Psoas muscle (tissue), 8 donors: ENCODE measurements at regions of chr1 and their contacts with region 1.

Region 1: DNA sequence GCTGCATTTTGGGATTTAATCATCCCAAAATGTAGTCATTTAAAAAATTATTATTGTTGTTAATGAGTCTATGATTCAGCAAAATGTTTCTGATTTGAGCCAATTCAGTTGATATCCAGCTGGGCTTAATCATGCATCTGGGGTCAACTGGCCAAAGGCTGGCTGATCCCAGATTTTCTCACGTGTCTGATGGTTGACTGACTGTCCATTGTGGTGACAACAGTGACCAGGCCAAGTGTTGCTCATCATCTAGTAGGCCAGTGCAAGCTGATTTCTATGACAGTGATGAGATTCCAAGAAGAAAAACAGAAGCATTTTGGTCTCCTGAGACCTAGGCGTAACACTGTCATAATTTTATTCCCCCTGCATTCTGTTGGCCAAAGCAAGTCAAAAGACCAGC is 80.1 kb upstream of the ZC3H11B start:
- DNase-seq: no peak
- ATAC-seq: no peak
- H3K4me3 ChIP-seq: no peak overlapping the region
- H3K27ac ChIP-seq: no peak overlapping the region
- H3K4me1 ChIP-seq: no peaks in the 10 kb centered on the region
- H3K27me3 ChIP-seq: no peaks in the 10 kb centered on the region
- CTCF ChIP-seq: no peak

Region 2: DNA sequence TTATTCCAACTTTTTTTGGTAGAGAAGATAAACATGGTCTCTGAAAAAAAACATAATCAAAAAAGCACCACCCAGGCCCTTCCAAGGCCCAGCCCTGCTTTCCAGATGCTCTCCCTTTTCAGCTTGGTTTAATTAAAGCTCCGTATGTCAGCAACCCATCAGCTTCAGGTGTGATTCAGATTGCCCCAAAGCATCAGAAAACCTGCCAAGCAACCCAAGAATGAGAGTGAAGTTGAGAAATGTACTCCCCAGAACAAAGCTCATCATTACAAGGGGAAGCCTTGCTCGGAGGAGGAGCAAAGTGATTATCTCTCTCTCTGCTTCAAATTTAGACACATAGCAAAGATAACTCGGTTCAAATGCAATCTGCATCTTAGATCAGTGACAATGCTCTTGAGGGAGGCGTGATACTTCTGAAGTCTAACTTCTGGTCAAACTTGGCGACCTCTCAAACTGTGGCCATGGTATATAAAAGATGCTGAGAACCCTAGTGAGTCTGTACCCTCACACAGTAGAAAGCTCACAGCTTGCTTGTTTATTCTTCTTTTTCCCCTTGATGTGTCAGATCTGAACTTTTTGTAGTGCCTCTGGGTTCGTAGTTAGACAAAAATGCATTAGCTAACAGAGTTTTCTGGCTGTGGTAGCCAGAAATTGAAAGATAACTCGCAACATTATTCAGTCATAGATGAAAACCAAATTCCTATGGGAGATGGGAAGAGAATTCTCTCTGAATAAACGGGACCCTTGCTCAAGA is 16.8 kb before region 1 on chr1:
- intact Hi-C with region 1: loop called in 1 of 2 experiments (anchors 1 kb)
- DNase-seq: no peak
- ATAC-seq: no peak
- H3K4me3 ChIP-seq: no peak overlapping the region
- H3K27ac ChIP-seq: no peak overlapping the region
- H3K4me1 ChIP-seq: no peaks in the 10 kb centered on the region
- H3K27me3 ChIP-seq: no peaks in the 10 kb centered on the region
- CTCF ChIP-seq: no peak

Region 3: DNA sequence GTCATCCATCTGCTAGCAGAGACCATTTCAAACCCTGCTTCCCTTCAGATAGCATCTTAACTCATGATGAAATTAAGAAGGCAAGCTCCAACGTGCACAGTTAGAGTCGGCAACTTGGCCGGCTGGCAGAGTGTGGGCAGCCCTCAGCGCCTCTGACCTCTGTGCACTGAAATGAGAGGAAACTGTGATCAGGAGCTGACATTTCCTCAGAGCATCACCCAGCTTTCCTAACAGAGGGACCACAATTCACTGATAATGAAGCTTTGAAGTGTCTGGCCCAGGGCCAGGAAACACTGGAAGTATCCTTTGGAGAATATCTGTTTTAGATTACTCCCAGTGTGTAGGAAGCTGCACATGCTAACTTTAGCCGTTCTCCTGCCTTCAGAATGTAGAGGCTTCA is 64.9 kb after region 1 on chr1:
- intact Hi-C with region 1: no loop called
- DNase-seq: no peak
- ATAC-seq: no peak
- H3K4me3 ChIP-seq: no peak overlapping the region
- H3K27ac ChIP-seq: no peak overlapping the region
- H3K4me1 ChIP-seq: no peaks in the 10 kb centered on the region
- H3K27me3 ChIP-seq: no peaks in the 10 kb centered on the region
- CTCF ChIP-seq: no peak